T-cell (primary cell): ENCODE measurements at regions of chr15 and their contacts with region 1.

Region 1: DNA sequence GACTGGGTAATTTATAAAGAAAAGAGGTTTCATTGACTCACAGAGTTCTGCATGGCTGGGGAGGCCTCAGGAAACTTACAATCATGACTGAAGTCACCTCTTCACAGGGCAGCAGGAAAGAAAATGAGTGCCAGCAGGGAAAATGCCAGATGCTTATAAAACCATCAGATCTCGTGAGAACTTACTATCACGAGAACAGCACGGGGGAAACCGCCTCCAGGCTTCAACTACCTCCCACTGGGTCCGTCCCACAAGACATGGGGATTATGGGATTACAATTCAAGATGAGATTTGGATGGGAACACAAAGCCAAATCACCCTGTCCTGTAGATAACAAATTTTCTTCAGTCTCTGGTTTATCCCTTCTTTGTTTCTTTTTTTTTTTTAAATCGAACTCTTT is 31.0 kb upstream of the AVEN start:
- DNase-seq: no peak
- ATAC-seq: no peak
- H3K4me3 ChIP-seq: no peak overlapping the region
- H3K4me3 Mint-ChIP-seq: no peak overlapping the region
- H3K27ac ChIP-seq: no peak overlapping the region
- H3K27ac Mint-ChIP-seq: no peak overlapping the region
- H3K4me1 ChIP-seq: no peaks in the 10 kb centered on the region
- H3K4me1 Mint-ChIP-seq: no peaks in the 10 kb centered on the region
- H3K27me3 ChIP-seq: no peaks in the 10 kb centered on the region
- H3K27me3 Mint-ChIP-seq: no peaks in the 10 kb centered on the region

Region 2: DNA sequence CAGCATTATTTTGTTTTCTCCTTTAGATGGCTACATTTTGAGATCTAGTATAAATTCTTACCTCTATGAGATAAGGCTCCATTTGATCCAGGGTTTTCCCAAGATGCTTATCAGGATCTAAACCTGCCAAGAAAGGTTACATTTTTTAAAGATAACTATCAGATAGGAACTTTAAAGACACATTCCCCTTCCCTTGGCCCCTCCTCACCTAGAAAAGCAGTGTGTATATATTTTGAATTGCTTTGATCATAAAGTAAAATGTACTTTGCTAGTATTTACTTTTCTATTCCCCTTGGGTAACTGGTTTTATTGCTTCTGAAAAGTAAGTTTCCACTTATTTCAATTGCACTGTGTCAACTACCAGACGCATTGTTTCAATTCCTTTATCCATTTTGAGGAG is 1340.8 kb after region 1 on chr15:
- CTCF ChIA-PET with region 1: interaction called in 1 of 2 experiments, 12 read pairs
- POLR2A ChIA-PET with region 1: no interaction called
- DNase-seq: no peak
- ATAC-seq: no peak
- H3K4me3 ChIP-seq: no peak overlapping the region
- H3K4me3 Mint-ChIP-seq: no peak overlapping the region
- H3K27ac ChIP-seq: no peak overlapping the region
- H3K27ac Mint-ChIP-seq: no peak overlapping the region
- H3K4me1 ChIP-seq: no peaks in the 10 kb centered on the region
- H3K4me1 Mint-ChIP-seq: no peaks in the 10 kb centered on the region
- H3K27me3 ChIP-seq: no peaks in the 10 kb centered on the region
- H3K27me3 Mint-ChIP-seq: no peaks in the 10 kb centered on the region